ENCODE measurements at regions of chr6 and their contacts with region 1.

Region 1: DNA sequence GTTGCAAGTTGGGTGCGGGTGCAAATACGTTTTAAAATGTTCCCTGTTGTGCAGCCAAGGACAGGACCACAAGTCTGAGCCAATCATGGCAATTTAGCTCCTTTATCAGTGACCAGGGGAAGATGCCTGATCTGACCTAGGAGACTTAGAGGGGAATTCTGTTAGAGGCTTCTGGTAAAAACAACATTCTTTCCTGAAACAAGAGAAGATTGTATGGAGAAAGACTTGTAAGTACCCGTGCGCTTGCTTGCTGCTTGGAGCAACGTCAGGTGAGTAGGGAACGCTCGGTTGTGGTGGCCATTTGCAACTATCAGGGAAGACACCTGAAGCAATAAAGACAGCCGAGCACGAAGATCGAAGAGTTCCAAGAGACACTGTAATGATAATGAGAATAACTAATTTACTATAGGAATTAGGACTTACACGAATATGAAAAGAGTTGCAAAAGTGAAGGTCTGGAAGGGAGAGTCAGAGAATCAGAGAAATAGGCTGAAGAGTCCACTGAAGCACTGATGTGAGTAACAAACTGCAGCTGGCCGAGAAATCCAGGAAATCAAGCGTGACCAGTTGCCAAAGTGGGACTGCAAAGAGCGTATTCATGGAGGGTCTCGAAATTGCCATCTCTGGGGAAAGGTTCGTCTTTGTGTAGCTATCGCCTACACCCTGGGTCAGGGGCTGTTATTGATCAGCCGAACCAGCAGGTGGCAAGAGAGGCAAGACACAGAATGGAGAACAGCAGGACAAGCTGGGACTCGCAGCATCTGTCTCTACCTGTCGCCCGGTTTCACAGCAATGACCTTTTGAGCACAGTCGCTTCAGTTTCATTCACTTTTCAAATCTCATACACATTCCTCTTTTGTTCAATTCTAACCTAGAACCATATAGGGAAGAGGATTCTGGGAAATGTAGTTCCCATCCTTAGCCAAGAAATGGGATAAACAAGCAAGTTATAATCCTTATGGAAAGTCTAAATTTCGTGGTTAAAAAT is 26.1 kb downstream of the LOC128125822 start:
- DNase-seq: no peak
- H3K4me3 ChIP-seq: peak overlapping the region; percentile 56
- CTCF ChIP-seq: peak; percentile 88

Region 2: GRCh38 chr6:63263444-63263843 is 334.9 kb before region 1 on chr6:
- CTCF ChIA-PET with region 1: no interaction called
- POLR2A ChIA-PET with region 1: no interaction called
- DNase-seq: no peak
- H3K4me3 ChIP-seq: no peak overlapping the region
- CTCF ChIP-seq: no peak

Region 3: DNA sequence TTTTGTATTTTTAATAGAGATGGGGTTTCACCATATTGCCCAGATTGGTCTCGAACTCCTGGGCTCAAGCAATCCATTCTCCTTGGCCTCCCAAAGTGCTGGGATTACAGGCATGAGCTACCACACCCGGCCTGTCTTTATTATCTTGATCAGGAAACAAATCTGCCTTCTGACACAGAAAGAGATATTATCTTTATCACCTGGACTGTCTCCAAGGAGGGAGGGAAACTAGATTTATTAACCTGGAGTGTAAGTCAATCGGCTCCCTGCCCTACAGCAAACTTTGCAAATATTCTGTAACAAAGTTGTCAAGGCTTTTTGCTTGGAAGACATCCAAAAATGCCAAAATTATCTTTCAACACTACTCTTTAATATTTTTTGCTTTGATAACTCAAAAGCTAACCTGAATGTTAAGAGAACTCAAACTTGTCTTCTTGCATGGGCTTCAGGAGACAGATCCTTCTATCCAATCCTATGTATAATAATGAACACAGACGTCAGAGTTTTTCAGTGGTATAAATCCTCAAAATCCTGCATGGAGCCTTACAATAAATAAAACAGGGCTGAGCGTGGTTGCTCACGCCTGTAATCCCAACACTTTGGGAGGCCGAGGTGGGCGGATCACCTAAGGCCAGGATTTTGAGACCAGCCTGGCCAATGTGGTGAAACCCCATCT is 111.1 kb before region 1 on chr6:
- CTCF ChIA-PET with region 1: no interaction called
- POLR2A ChIA-PET with region 1: no interaction called
- DNase-seq: no peak
- H3K4me3 ChIP-seq: no peak overlapping the region
- CTCF ChIP-seq: no peak

Region 4: GRCh38 chr6:63584125-63584514 is 14.2 kb before region 1 on chr6:
- CTCF ChIA-PET with region 1: interaction called, 19 read pairs
- POLR2A ChIA-PET with region 1: no interaction called
- DNase-seq: no peak
- H3K4me3 ChIP-seq: no peak overlapping the region
- CTCF ChIP-seq: no peak

Region 5: GRCh38 chr6:63615590-63615989 is 17.2 kb after region 1 on chr6:
- CTCF ChIA-PET with region 1: interaction called, 18 read pairs
- POLR2A ChIA-PET with region 1: no interaction called
- DNase-seq: no peak
- H3K4me3 ChIP-seq: no peak overlapping the region
- CTCF ChIP-seq: no peak

Region 6: GRCh38 chr6:63635588-63636517 is 37.5 kb after region 1 on chr6 and contains the start of gene PHF3:
- CTCF ChIA-PET with region 1: interaction called, 34 read pairs
- POLR2A ChIA-PET with region 1: no interaction called
- DNase-seq: peak; percentile 31
- H3K4me3 ChIP-seq: peak within 1 kb of the TSS; percentile 79
- CTCF ChIP-seq: peak; percentile 36